ENCODE measurements at regions of chr20 and their contacts with region 1.

Region 1: DNA sequence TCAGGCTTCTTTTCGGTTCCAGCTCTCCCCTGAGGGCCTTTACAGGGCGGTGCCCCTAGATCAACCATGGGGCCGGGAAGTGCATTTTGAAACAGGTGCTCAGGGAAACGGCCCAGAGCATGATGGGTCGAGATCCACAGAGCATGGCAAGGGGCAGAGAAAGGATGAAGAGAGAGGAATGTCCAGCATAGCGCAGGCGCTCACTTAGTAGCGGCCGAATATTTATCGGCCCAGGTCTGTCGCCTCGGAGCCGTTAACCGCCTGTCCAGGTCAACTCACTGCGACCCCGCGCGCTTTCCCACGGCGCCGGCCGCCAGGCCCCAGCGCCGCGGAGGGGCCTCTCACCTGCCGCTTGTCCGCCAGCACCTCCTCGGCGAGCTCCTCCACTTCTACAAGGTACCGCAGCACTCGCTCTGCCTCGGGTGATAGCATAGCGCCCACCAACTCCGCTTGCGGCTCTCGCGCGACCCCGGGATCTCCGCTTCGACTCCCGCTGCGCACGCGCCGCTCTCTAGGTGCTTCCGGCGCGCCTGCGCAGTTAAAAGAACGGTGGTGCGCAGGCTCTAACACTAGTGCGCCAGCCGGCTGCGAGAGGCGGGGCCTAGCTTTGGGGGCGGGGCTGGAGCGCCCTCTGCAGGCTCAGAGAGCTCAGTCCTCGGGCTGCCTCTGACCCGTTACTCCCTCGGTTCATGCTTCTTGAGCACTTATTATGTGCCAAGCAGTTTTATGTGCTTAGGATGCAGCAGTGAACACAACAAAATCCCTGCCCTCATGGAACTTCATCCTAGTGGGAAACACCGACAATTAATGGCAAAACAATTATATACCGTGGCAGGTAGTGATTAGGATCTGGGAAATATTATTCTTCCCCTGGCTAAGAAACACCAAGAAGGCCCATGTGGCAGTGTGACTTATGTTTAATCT is at the start of gene PDRG1:
- DNase-seq: peak; percentile 98
- ATAC-seq: peak; percentile 98
- H3K4me3 Mint-ChIP-seq: peak within 1 kb of the TSS; percentile 90
- H3K27ac Mint-ChIP-seq: peak within 1 kb of the TSS; percentile 93
- H3K4me1 Mint-ChIP-seq: peaks cover 25% of the 10 kb centered on the region
- H3K27me3 Mint-ChIP-seq: peaks cover 13% of the 10 kb centered on the region
- total RNA-seq, gene PDRG1: 14.9 to 15.6 TPM

Region 2: DNA sequence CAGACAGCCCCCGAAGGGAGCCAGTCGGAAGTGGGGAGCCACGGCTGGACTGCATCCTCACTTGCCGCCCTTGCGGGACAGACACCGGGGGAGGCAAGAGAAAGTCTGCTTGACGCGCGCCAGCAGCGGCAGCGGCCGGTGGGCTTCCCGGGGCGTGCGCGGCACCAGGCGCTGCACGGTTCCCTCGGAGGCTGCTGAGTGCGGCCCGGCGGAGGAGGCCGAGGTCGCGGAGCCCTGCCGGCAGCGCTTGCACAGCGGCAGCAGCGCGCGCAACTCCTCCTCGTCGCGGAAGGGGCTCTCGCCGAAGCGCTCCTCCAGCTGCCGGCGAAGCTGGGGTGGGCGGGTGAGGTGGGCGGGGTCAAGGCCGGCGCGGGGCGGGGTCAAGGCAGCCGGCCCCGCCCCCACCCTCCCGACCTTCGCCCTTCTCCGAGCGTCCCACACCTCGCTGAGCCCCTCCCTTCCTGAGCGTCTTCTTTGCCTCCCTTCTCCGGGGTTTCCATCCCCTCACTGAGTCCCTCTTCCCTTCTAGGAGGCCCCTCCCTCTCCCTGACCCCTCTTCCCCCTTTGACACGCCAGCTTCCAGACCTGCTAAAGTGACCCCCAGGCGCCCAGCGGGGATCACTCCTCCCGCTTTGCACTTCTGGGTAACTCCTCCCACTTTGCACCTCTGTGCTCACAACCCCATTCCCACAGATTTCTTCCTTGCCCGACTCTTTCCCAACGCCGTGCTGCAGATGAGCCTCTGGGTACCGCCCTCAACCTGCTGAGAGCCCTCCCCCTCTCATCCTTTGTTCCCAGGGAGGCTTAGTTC is 90.2 kb before region 1 on chr20:
- CTCF ChIA-PET with region 1: interaction called, 107 read pairs
- DNase-seq: peak; percentile 80
- ATAC-seq: peak; percentile 94
- H3K4me3 Mint-ChIP-seq: peak overlapping the region; percentile 4
- H3K27ac Mint-ChIP-seq: no peak overlapping the region
- H3K4me1 Mint-ChIP-seq: peaks cover 8% of the 10 kb centered on the region
- H3K27me3 Mint-ChIP-seq: peaks cover 34% of the 10 kb centered on the region

Region 3: GRCh38 chr20:31879143-31879987 is 72.4 kb before region 1 on chr20:
- CTCF ChIA-PET with region 1: interaction called, 17 read pairs
- DNase-seq: peak; percentile 89
- ATAC-seq: peak; percentile 97
- H3K4me3 Mint-ChIP-seq: peak overlapping the region; percentile 81
- H3K27ac Mint-ChIP-seq: peak overlapping the region; percentile 49
- H3K4me1 Mint-ChIP-seq: peaks cover 15% of the 10 kb centered on the region
- H3K27me3 Mint-ChIP-seq: peaks cover 36% of the 10 kb centered on the region

Region 4: GRCh38 chr20:31968291-31969126 is 16.7 kb after region 1 on chr20:
- CTCF ChIA-PET with region 1: interaction called, 16 read pairs
- DNase-seq: peak; percentile 85
- ATAC-seq: peak; percentile 94
- H3K4me3 Mint-ChIP-seq: peak overlapping the region; percentile 73
- H3K27ac Mint-ChIP-seq: no peak overlapping the region
- H3K4me1 Mint-ChIP-seq: peaks cover 7% of the 10 kb centered on the region
- H3K27me3 Mint-ChIP-seq: peaks cover 47% of the 10 kb centered on the region

Region 5: GRCh38 chr20:32098786-32099185 is 147.0 kb after region 1 on chr20:
- CTCF ChIA-PET with region 1: no interaction called
- DNase-seq: no peak
- ATAC-seq: no peak
- H3K4me3 Mint-ChIP-seq: no peak overlapping the region
- H3K27ac Mint-ChIP-seq: no peak overlapping the region
- H3K4me1 Mint-ChIP-seq: no peaks in the 10 kb centered on the region
- H3K27me3 Mint-ChIP-seq: peaks cover 37% of the 10 kb centered on the region